SK-N-SH (cell line): ENCODE measurements at regions of chr17 and their contacts with region 1.

Region 1: GRCh38 chr17:78250891-78251794 is 19.7 kb downstream of the TMEM235 start:
- DNase-seq: peak; percentile 99
- H3K4me3 ChIP-seq: peak overlapping the region; percentile 10 to 40; a peak in 2 of 4 replicates
- H3K27ac ChIP-seq: peak overlapping the region in 1 of 2 experiments; percentile 82; a peak in 2 of 4 replicates
- H3K4me1 ChIP-seq: peaks cover 0 to 63% of the 10 kb centered on the region in 2 experiments; a peak in 1 of 4 replicates
- H3K27me3 ChIP-seq: no peaks in the 10 kb centered on the region
- CTCF ChIP-seq: peak; percentile 100
- EP300 ChIP-seq: no peak
- RAD21 ChIP-seq: peak; percentile 99

Region 2: GRCh38 chr17:78089576-78090281 is 161.4 kb before region 1 on chr17:
- CTCF ChIA-PET with region 1: interaction called, 11 read pairs
- POLR2A ChIA-PET with region 1: no interaction called
- DNase-seq: no peak
- H3K4me3 ChIP-seq: no peak overlapping the region
- H3K27ac ChIP-seq: no peak overlapping the region
- H3K4me1 ChIP-seq: peaks cover 0 to 3% of the 10 kb centered on the region in 2 experiments; a peak in 1 of 4 replicates
- H3K27me3 ChIP-seq: no peaks in the 10 kb centered on the region
- CTCF ChIP-seq: no peak
- EP300 ChIP-seq: no peak
- RAD21 ChIP-seq: no peak

Region 3: DNA sequence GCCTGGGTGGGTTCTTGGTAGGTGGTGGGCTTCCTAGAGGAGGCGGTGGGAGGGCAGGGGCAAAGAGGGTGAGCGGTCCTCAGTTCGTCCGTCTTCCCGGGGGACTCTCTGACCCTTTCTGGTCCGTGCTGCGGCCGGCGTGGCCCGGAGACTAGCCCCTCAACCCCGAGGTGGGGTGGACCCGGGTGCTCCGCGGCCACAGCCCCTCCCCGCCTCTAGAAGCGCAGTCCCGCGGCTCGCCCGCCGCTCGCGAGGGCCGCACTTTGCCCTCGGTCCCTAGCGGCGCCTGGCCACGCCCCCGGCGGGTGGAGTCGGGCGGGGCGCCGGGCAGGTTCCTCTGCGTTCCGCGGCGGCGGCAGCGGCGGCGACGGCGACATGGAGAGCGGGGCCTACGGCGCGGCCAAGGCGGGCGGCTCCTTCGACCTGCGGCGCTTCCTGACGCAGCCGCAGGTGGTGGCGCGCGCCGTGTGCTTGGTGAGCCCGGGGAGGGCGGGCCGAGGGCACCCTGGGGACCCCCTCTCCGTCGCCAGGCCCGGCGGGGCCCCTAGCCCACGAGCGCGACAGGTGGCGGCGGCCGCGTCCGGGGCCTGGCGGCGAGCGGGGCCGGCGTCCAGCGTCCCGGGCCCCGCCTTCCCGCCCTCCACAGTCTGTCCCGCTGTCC is 82.8 kb before region 1 on chr17 and contains the start of gene SYNGR2:
- CTCF ChIA-PET with region 1: interaction called, 10 read pairs
- POLR2A ChIA-PET with region 1: no interaction called
- DNase-seq: peak; percentile 99
- H3K4me3 ChIP-seq: peak within 1 kb of the TSS; percentile 71 to 85
- H3K27ac ChIP-seq: peak within 1 kb of the TSS in 1 of 2 experiments; percentile 64; a peak in 2 of 4 replicates
- H3K4me1 ChIP-seq: peaks cover 8 to 17% of the 10 kb centered on the region in 2 experiments; a peak in 2 of 4 replicates
- H3K27me3 ChIP-seq: no peaks in the 10 kb centered on the region
- CTCF ChIP-seq: no peak
- EP300 ChIP-seq: peak; percentile 24 to 31; a peak in 1 of 4 replicates
- RAD21 ChIP-seq: peak; percentile 18; the same call in 1 of the 2 replicates
- polyA plus RNA-seq, gene SYNGR2: 160 and 181 TPM in 2 replicates

Region 4: GRCh38 chr17:78226749-78227399 is 24.3 kb before region 1 on chr17:
- CTCF ChIA-PET with region 1: interaction called, 196 read pairs
- POLR2A ChIA-PET with region 1: interaction called, 6 read pairs
- DNase-seq: no peak
- H3K4me3 ChIP-seq: no peak overlapping the region
- H3K27ac ChIP-seq: peak overlapping the region in 1 of 2 experiments; percentile 98; a peak in 2 of 4 replicates
- H3K4me1 ChIP-seq: peaks cover 8 to 54% of the 10 kb centered on the region in 2 experiments; a peak in 3 of 4 replicates
- H3K27me3 ChIP-seq: peaks cover 11% of the 10 kb centered on the region
- CTCF ChIP-seq: no peak
- EP300 ChIP-seq: no peak
- RAD21 ChIP-seq: no peak

Region 5: GRCh38 chr17:78289802-78290363 is 38.7 kb after region 1 on chr17:
- CTCF ChIA-PET with region 1: interaction called, 35 read pairs
- POLR2A ChIA-PET with region 1: interaction called, 4 read pairs
- DNase-seq: peak; percentile 89
- H3K4me3 ChIP-seq: no peak overlapping the region
- H3K27ac ChIP-seq: no peak overlapping the region
- H3K4me1 ChIP-seq: peaks cover 0 to 7% of the 10 kb centered on the region in 2 experiments; a peak in 1 of 4 replicates
- H3K27me3 ChIP-seq: no peaks in the 10 kb centered on the region
- CTCF ChIP-seq: peak; percentile 98
- EP300 ChIP-seq: no peak
- RAD21 ChIP-seq: peak; percentile 96

Region 6: GRCh38 chr17:78365561-78366108 is 114.5 kb after region 1 on chr17:
- CTCF ChIA-PET with region 1: interaction called, 55 read pairs
- POLR2A ChIA-PET with region 1: no interaction called
- DNase-seq: no peak
- H3K4me3 ChIP-seq: no peak overlapping the region
- H3K27ac ChIP-seq: no peak overlapping the region; a peak in 1 of 4 replicates
- H3K4me1 ChIP-seq: peaks cover 4 to 48% of the 10 kb centered on the region in 2 experiments; a peak in 1 of 4 replicates
- H3K27me3 ChIP-seq: no peaks in the 10 kb centered on the region
- CTCF ChIP-seq: no peak
- EP300 ChIP-seq: no peak
- RAD21 ChIP-seq: no peak